Activated CD4-positive, alpha-beta memory T cell treated with anti-CD3 and anti-CD28 coated beads for 36 hours (primary cell): ENCODE measurements at regions of chr9 and their contacts with region 1.

Region 1: DNA sequence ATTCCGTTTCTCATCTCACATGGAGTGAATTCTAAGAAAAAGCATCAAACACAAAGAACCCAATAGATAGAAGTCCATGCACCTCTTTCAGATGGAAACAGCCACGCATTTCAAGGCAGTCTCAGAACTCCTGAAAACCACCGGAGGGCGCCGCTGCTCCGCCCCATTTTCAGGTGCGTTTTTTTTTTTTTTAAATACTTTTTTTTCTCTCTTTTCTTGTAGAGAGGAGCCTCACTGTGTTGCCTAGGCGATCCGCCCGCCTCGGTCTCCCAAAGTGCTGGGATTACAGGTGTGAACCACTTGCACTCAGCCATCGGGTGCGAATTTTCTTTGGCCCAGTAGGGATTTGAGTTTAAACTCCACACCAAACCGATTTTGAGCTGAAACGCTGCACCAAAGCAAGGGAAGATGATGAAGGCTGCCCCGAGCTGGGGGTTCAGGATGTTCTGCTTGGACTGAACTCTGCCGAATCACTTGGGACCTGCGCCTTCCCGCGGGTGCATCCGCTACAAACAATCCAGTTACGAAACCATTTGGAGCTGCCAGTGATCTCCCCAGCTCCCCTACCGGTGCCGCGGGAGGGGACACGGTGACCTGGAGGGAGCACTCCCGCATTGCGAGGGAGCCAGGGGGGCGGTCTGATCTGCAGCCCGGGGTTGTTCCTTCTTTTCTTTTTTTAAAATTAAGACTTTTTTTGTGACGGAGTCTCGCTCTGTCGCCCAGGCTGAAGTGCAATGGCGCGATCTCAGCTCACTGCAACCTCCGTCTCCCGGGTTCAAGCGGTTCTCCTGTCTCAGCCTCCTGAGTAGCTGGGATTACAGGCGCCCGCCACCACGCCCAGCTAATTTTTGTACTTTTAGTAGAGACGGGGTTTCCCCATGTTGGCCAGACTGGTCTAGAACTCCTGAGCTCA is 1.4 kb downstream of the PTGR1 start:
- DNase-seq: peak; percentile 76
- H3K4me3 Mint-ChIP-seq: peak overlapping the region; percentile 83
- H3K27ac Mint-ChIP-seq: no peak overlapping the region
- H3K4me1 Mint-ChIP-seq: peaks cover 14% of the 10 kb centered on the region
- H3K27me3 Mint-ChIP-seq: peaks cover 28% of the 10 kb centered on the region

Region 2: DNA sequence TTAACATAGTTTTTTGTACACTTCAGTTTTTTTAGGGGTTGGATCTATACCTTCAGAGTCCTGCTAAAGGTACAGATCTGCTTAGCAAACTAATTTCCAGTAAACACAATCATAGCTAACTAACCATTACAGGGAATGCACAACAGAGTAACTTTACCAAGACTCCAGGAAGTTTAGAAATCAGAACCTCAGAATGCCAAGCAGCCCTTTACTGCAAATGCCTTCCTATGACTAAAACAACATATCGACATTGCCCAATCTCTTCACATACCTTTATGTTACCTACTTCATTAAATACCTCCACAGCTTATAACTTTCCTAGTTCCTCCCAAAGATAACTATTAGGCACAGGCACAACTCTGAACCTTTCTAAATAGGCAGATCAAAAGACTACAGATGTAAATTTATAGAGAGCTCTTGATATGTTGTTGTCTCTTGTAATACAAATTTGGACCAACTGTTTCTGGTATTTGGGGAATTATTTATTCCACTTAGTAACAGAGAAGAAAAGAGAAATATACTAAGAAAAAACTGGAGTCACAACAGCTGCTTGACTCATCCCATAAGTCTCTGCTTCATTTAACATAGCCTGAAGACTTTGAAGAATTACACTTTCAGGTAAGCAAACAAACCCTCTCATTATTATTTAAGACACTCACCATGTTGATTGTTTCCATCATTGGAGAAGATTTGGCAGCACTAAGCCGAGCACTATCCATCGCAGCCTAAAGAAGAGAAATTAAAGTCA is 222.1 kb before region 1 on chr9:
- CTCF ChIA-PET with region 1: no interaction called
- POLR2A ChIA-PET with region 1: no interaction called
- intact Hi-C with region 1: no loop called
- DNase-seq: no peak
- H3K4me3 Mint-ChIP-seq: no peak overlapping the region
- H3K27ac Mint-ChIP-seq: no peak overlapping the region
- H3K4me1 Mint-ChIP-seq: no peaks in the 10 kb centered on the region
- H3K27me3 Mint-ChIP-seq: no peaks in the 10 kb centered on the region

Region 3: DNA sequence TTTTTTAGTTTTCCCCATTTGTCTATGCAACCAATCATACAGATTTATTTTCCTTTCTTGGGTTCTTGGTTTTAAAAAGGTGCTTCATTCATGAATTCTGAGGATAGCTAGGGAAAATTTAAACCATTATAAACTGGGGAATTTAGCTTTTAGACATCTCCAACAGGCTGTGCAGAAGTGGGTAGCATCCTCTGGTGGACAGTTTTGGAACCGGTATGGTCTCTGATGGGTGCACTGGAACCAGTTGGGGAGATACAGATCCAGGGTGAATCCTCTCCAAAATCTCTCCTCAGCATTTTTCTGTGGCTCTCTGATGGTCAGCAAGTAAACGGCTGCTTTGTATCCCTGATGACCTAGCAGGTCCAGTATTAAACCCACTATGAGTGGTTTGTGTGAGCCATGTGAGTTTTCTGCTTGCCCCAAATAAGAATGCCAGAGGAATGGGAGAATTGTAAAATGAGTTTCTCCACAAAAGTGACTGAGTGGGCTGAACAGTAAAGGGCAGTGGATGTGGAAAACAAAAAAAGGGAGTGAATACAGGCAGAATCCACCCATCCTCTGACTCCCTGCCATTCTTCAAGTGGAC is 23.9 kb after region 1 on chr9:
- CTCF ChIA-PET with region 1: interaction called, 5 read pairs
- POLR2A ChIA-PET with region 1: no interaction called
- intact Hi-C with region 1: loop called (anchors 1 kb)
- DNase-seq: peak; percentile 37
- H3K4me3 Mint-ChIP-seq: no peak overlapping the region
- H3K27ac Mint-ChIP-seq: no peak overlapping the region
- H3K4me1 Mint-ChIP-seq: no peaks in the 10 kb centered on the region
- H3K27me3 Mint-ChIP-seq: peaks cover 2% of the 10 kb centered on the region

Region 4: GRCh38 chr9:111661150-111661801 is 63.2 kb after region 1 on chr9 and contains the start of gene GNG10:
- CTCF ChIA-PET with region 1: interaction called, 5 read pairs
- POLR2A ChIA-PET with region 1: interaction called, 6 read pairs
- intact Hi-C with region 1: loop called (anchors 2 kb)
- DNase-seq: peak; percentile 75
- H3K4me3 Mint-ChIP-seq: peak within 1 kb of the TSS; percentile 95
- H3K27ac Mint-ChIP-seq: peak within 1 kb of the TSS; percentile 92
- H3K4me1 Mint-ChIP-seq: peaks cover 27% of the 10 kb centered on the region
- H3K27me3 Mint-ChIP-seq: no peaks in the 10 kb centered on the region
- total RNA-seq, gene GNG10: 21.7 to 22.1 TPM

Region 5: DNA sequence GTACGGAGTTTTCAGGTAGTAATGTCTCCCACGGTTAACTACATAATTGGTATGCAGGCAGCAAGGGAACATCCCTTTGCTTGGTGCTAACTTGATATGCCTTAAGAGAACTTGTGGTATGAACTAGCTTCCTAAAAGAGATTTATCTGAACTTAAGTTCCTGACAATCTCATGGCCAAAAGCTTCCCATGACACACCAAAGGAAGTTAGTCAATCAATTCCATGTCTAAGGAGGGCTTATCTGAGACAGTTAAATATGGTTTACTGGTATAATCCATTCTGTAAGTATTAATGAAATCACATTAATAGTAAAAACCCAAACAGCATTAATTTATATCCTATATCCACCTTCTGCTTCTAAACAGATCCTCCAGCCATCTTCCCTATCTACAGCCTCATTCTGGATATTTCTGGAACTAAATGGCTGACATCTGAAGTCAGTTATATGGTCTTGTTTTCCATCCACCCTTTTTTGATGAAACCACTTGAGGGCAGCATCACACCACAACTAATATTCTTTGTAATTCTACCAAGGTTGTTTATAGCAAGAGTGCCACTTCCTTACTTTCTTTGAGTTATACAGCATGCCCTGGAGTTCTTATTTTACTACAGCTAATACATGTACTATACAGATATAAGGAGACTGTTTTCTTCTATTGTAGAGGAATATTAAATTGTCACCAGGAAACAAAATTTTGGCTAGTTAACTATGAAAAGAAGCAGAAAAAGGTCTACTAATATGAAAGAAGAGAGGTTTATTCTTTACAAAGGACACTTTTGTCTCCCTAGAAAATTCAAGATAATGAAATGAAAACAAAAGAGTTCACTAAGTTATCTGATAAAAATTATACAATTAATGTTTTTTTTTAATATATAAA is 161.9 kb after region 1 on chr9:
- CTCF ChIA-PET with region 1: interaction called, 4 read pairs
- POLR2A ChIA-PET with region 1: no interaction called
- intact Hi-C with region 1: loop called (anchors 2 kb)
- DNase-seq: peak; percentile 22
- H3K4me3 Mint-ChIP-seq: no peak overlapping the region
- H3K27ac Mint-ChIP-seq: no peak overlapping the region
- H3K4me1 Mint-ChIP-seq: peaks cover 2% of the 10 kb centered on the region
- H3K27me3 Mint-ChIP-seq: no peaks in the 10 kb centered on the region